ENCODE measurements at regions of chr3 and their contacts with region 1.

Region 1: GRCh38 chr3:4350789-4351163 is 47.6 kb downstream of the SETMAR start:
- DNase-seq: peak; percentile 77
- H3K4me3 ChIP-seq: peak overlapping the region; percentile 4 to 37
- H3K27ac ChIP-seq: peak overlapping the region; percentile 2 to 75
- H3K4me1 ChIP-seq: no peaks in the 10 kb centered on the region
- H3K27me3 ChIP-seq: no peaks in the 10 kb centered on the region
- CTCF ChIP-seq: peak; percentile 78 to 88 (median 78)
- POLR2A ChIP-seq: no peak

Region 2: GRCh38 chr3:4633078-4634004 is 282.6 kb after region 1 on chr3:
- intact Hi-C with region 1: loop called (anchors 10 kb)
- DNase-seq: no peak
- H3K4me3 ChIP-seq: no peak overlapping the region
- H3K27ac ChIP-seq: no peak overlapping the region
- H3K4me1 ChIP-seq: no peaks in the 10 kb centered on the region
- H3K27me3 ChIP-seq: no peaks in the 10 kb centered on the region
- CTCF ChIP-seq: peak; percentile 64 to 79 (median 72)
- POLR2A ChIP-seq: no peak

Measured in testis (tissue), 5 donors.